ENCODE measurements at regions of chr4 and their contacts with region 1.

Region 1: GRCh38 chr4:184680698-184681097 is 31.2 kb downstream of the PRIMPOL start:
- DNase-seq: no peak
- ATAC-seq: no peak
- H3K4me3 ChIP-seq: no peak overlapping the region
- H3K27ac ChIP-seq: no peak overlapping the region
- H3K4me1 ChIP-seq: no peaks in the 10 kb centered on the region
- H3K27me3 ChIP-seq: no peaks in the 10 kb centered on the region
- CTCF ChIP-seq: no peak

Region 2: GRCh38 chr4:184636897-184637296 is 43.8 kb before region 1 on chr4:
- intact Hi-C with region 1: loop called in 1 of 2 experiments (anchors 1 kb)
- DNase-seq: no peak
- ATAC-seq: no peak
- H3K4me3 ChIP-seq: no peak overlapping the region
- H3K27ac ChIP-seq: no peak overlapping the region
- H3K4me1 ChIP-seq: peaks cover 10% of the 10 kb centered on the region
- H3K27me3 ChIP-seq: no peaks in the 10 kb centered on the region
- CTCF ChIP-seq: no peak

Region 3: GRCh38 chr4:184722798-184723197 is 42.1 kb after region 1 on chr4:
- intact Hi-C with region 1: no loop called
- DNase-seq: no peak
- ATAC-seq: no peak
- H3K4me3 ChIP-seq: no peak overlapping the region
- H3K27ac ChIP-seq: no peak overlapping the region
- H3K4me1 ChIP-seq: no peaks in the 10 kb centered on the region
- H3K27me3 ChIP-seq: no peaks in the 10 kb centered on the region
- CTCF ChIP-seq: no peak

Region 4: GRCh38 chr4:184805462-184806228 is 124.9 kb after region 1 on chr4:
- intact Hi-C with region 1: no loop called
- DNase-seq: peak; percentile 88 to 97
- ATAC-seq: peak; percentile 81 to 89 (median 85)
- H3K4me3 ChIP-seq: peak overlapping the region; percentile 71
- H3K27ac ChIP-seq: peak overlapping the region; percentile 92
- H3K4me1 ChIP-seq: peaks cover 78% of the 10 kb centered on the region
- H3K27me3 ChIP-seq: no peaks in the 10 kb centered on the region
- CTCF ChIP-seq: no peak